GM12878 (cell line): ENCODE measurements at regions of chr6 and their contacts with region 1.

Region 1: GRCh38 chr6:157563611-157564284 is 182.8 kb downstream of the ZDHHC14 start:
- DNase-seq: peak; percentile 93
- ATAC-seq: peak; percentile 81
- H3K4me3 ChIP-seq: no peak overlapping the region; the same call in 1 of the 2 replicates
- H3K27ac ChIP-seq: peak overlapping the region; percentile 38; the same call in 1 of the 2 replicates
- H3K4me1 ChIP-seq: peaks cover 52% of the 10 kb centered on the region
- H3K27me3 ChIP-seq: no peaks in the 10 kb centered on the region
- CTCF ChIP-seq: peak in 2 of 3 experiments; percentile 26 to 36; a peak in 3 of 6 replicates
- EP300 ChIP-seq: peak; percentile 88 to 95
- POLR2A ChIP-seq: no peak
- RAD21 ChIP-seq: peak; percentile 45

Region 2: DNA sequence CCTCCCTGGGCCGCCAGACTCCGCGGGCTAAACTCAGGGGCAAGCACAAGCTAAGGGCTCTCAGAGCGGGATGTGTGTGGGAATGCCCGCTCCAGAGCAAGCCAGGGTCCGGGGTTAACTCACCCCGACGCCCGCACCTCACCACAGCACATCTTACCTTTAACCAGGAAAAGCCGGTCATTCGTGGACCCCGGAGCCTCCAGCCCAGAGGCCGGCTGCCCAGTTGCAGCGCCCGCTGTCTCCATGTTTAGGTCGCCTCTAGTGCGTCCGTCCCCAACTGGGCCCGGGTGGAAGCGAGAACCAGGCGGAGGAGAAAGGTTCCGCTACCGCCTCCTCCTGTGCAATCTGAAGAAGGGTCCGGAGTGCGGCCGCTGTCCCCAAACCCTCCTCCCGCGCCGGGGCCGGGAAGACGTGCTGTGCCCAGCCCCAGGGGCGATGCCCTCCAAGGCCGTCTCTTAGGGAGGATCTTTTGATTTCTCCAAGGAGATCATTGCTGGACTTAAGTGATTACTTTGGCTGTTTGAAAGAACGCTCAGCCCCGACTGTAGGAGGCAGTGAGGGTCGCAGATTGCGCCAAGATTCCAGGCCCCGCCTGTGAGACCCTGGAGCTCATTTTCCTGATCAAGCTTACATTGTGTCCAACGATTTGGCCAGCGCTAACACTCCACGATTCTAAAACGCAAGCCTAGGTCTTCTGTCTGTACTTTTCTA is 240.3 kb before region 1 on chr6 and contains the start of gene TMEM242:
- CTCF ChIA-PET with region 1: interaction called, 13 read pairs
- POLR2A ChIA-PET with region 1: interaction called, 3 read pairs
- RAD21 ChIA-PET with region 1: interaction called, 19 read pairs
- SMC1A ChIA-PET with region 1: interaction called, 16 read pairs
- in situ Hi-C with region 1: no loop called
- intact Hi-C with region 1: loop called (anchors 2 kb)
- DNase-seq: peak; percentile 74
- ATAC-seq: peak; percentile 91
- H3K4me3 ChIP-seq: peak within 1 kb of the TSS; percentile 86
- H3K27ac ChIP-seq: peak within 1 kb of the TSS; percentile 49
- H3K4me1 ChIP-seq: peaks cover 9% of the 10 kb centered on the region
- H3K27me3 ChIP-seq: no peaks in the 10 kb centered on the region
- CTCF ChIP-seq: peak in 2 of 3 experiments; percentile 13 to 14; a peak in 1 of 6 replicates
- EP300 ChIP-seq: no peak
- POLR2A ChIP-seq: peak; percentile 96
- RAD21 ChIP-seq: no peak; the same call in 1 of the 2 replicates
- polyA plus RNA-seq, gene TMEM242: 6.1 to 6.2 TPM

Region 3: GRCh38 chr6:157385482-157385881 is 178.3 kb before region 1 on chr6:
- CTCF ChIA-PET with region 1: interaction called, 8 read pairs
- POLR2A ChIA-PET with region 1: interaction called, 5 read pairs
- RAD21 ChIA-PET with region 1: interaction called, 12 read pairs
- SMC1A ChIA-PET with region 1: interaction called, 11 read pairs
- in situ Hi-C with region 1: no loop called
- intact Hi-C with region 1: loop called (anchors 2 kb)
- DNase-seq: peak; percentile 44
- ATAC-seq: peak; percentile 45
- H3K4me3 ChIP-seq: no peak overlapping the region
- H3K27ac ChIP-seq: no peak overlapping the region
- H3K4me1 ChIP-seq: no peaks in the 10 kb centered on the region
- H3K27me3 ChIP-seq: peaks cover 0 to 4% of the 10 kb centered on the region in 2 experiments; a peak in 1 of 4 replicates
- CTCF ChIP-seq: no peak
- EP300 ChIP-seq: peak; percentile 48 to 52; a peak in 2 of 4 replicates
- POLR2A ChIP-seq: no peak
- RAD21 ChIP-seq: no peak

Region 4: GRCh38 chr6:157527471-157527907 is 36.3 kb before region 1 on chr6:
- CTCF ChIA-PET with region 1: interaction called, 7 read pairs
- POLR2A ChIA-PET with region 1: no interaction called
- RAD21 ChIA-PET with region 1: interaction called, 22 read pairs
- SMC1A ChIA-PET with region 1: interaction called, 22 read pairs
- in situ Hi-C with region 1: no loop called
- intact Hi-C with region 1: loop called (anchors 5 kb)
- DNase-seq: peak; percentile 48
- ATAC-seq: peak; percentile 93
- H3K4me3 ChIP-seq: no peak overlapping the region
- H3K27ac ChIP-seq: no peak overlapping the region
- H3K4me1 ChIP-seq: no peaks in the 10 kb centered on the region
- H3K27me3 ChIP-seq: no peaks in the 10 kb centered on the region
- CTCF ChIP-seq: peak in 1 of 3 experiments; percentile 23; a peak in 1 of 6 replicates
- EP300 ChIP-seq: peak; percentile 49 to 67; a peak in 3 of 4 replicates
- POLR2A ChIP-seq: no peak
- RAD21 ChIP-seq: no peak

Region 5: GRCh38 chr6:157548635-157549467 is 14.9 kb before region 1 on chr6:
- CTCF ChIA-PET with region 1: interaction called, 3 read pairs
- POLR2A ChIA-PET with region 1: no interaction called
- RAD21 ChIA-PET with region 1: no interaction called
- SMC1A ChIA-PET with region 1: interaction called, 12 read pairs
- in situ Hi-C with region 1: no loop called
- intact Hi-C with region 1: no loop called
- DNase-seq: no peak
- ATAC-seq: peak; percentile 67
- H3K4me3 ChIP-seq: no peak overlapping the region
- H3K27ac ChIP-seq: no peak overlapping the region
- H3K4me1 ChIP-seq: no peaks in the 10 kb centered on the region
- H3K27me3 ChIP-seq: no peaks in the 10 kb centered on the region
- CTCF ChIP-seq: no peak
- EP300 ChIP-seq: no peak
- POLR2A ChIP-seq: no peak
- RAD21 ChIP-seq: no peak

Region 6: GRCh38 chr6:157667211-157668008 is 103.7 kb after region 1 on chr6:
- CTCF ChIA-PET with region 1: interaction called, 15 read pairs
- POLR2A ChIA-PET with region 1: no interaction called
- RAD21 ChIA-PET with region 1: interaction called, 18 read pairs
- SMC1A ChIA-PET with region 1: interaction called, 15 read pairs
- in situ Hi-C with region 1: no loop called
- intact Hi-C with region 1: loop called (anchors 1 kb)
- DNase-seq: peak; percentile 36
- ATAC-seq: peak; percentile 94
- H3K4me3 ChIP-seq: no peak overlapping the region
- H3K27ac ChIP-seq: no peak overlapping the region
- H3K4me1 ChIP-seq: no peaks in the 10 kb centered on the region
- H3K27me3 ChIP-seq: 0 out of 4 replicates have a peak, but pooled peaks cover 0 to 2% of the 10 kb centered on the region in 2 experiments
- CTCF ChIP-seq: peak; percentile 74 to 81 (median 79)
- EP300 ChIP-seq: no peak
- POLR2A ChIP-seq: no peak
- RAD21 ChIP-seq: peak; percentile 95